Activated CD4-positive, alpha-beta T cell treated with anti-CD3 and anti-CD28 coated beads, Interleukin-2, amount 10 ng/mL, durations not matched to agents 24 days and 14 days (primary cell): ENCODE measurements at regions of chr5 and their contacts with region 1.

Region 1: GRCh38 chr5:36875790-36876388 is 680 bp upstream of the NIPBL start:
- DNase-seq: peak; percentile 93
- H3K4me3 Mint-ChIP-seq: peak overlapping the region; percentile 88
- H3K27ac Mint-ChIP-seq: peak overlapping the region; percentile 91
- H3K4me1 Mint-ChIP-seq: peaks cover 28% of the 10 kb centered on the region
- H3K27me3 Mint-ChIP-seq: no peaks in the 10 kb centered on the region

Region 2: GRCh38 chr5:36241631-36242533 is 634.0 kb before region 1 on chr5 and contains the start of gene NADK2:
- intact Hi-C with region 1: loop called (anchors 5 kb)
- DNase-seq: peak; percentile 98
- H3K4me3 Mint-ChIP-seq: peak within 1 kb of the TSS; percentile 87
- H3K27ac Mint-ChIP-seq: peak within 1 kb of the TSS; percentile 94
- H3K4me1 Mint-ChIP-seq: peaks cover 28% of the 10 kb centered on the region
- H3K27me3 Mint-ChIP-seq: peaks cover 7% of the 10 kb centered on the region
- total RNA-seq, gene NADK2: 23.0 and 25.8 TPM in 2 replicates

Region 3: GRCh38 chr5:36894954-36895353 is 19.1 kb after region 1 on chr5:
- intact Hi-C with region 1: loop called (anchors 2 kb)
- DNase-seq: no peak
- H3K4me3 Mint-ChIP-seq: no peak overlapping the region
- H3K27ac Mint-ChIP-seq: no peak overlapping the region
- H3K4me1 Mint-ChIP-seq: peaks cover 24% of the 10 kb centered on the region
- H3K27me3 Mint-ChIP-seq: no peaks in the 10 kb centered on the region

Region 4: DNA sequence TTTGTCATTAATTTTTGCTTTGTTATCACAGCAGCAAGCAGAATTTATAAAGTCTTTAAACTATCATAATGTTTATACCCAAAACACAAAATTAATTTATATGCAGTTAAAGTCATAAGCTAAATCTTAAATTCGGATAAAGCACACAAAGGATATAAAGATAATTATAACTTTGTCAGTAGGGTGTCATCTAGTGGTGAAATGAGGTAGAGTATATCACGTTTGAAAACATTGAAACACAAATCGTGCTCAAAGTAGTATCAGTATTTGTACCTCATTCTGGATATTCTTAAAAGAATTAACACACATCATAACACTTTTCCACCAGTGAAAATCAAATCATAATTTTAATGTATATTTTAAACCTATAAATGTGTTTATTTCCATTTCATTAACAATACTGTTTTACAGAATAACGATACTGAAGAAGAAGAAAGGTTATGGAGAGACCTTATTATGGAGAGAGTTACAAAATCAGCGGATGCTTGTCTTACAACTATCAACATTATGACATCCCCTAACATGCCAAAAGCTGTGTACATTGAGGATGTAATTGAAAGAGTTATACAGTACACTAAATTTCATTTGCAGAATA is 130.2 kb after region 1 on chr5:
- intact Hi-C with region 1: loop called (anchors 10 kb)
- DNase-seq: no peak
- H3K4me3 Mint-ChIP-seq: no peak overlapping the region
- H3K27ac Mint-ChIP-seq: no peak overlapping the region
- H3K4me1 Mint-ChIP-seq: no peaks in the 10 kb centered on the region
- H3K27me3 Mint-ChIP-seq: no peaks in the 10 kb centered on the region

Region 5: GRCh38 chr5:37370864-37371726 is 495.2 kb after region 1 on chr5 and contains the start of gene NUP155:
- intact Hi-C with region 1: loop called (anchors 5 kb)
- DNase-seq: peak; percentile 97
- H3K4me3 Mint-ChIP-seq: peak within 1 kb of the TSS; percentile 91
- H3K27ac Mint-ChIP-seq: peak within 1 kb of the TSS; percentile 95
- H3K4me1 Mint-ChIP-seq: peaks cover 23% of the 10 kb centered on the region
- H3K27me3 Mint-ChIP-seq: no peaks in the 10 kb centered on the region
- total RNA-seq, gene NUP155: 85.1 and 86.2 TPM in 2 replicates